ENCODE measurements at regions of chr18 and their contacts with region 1.

Region 1: DNA sequence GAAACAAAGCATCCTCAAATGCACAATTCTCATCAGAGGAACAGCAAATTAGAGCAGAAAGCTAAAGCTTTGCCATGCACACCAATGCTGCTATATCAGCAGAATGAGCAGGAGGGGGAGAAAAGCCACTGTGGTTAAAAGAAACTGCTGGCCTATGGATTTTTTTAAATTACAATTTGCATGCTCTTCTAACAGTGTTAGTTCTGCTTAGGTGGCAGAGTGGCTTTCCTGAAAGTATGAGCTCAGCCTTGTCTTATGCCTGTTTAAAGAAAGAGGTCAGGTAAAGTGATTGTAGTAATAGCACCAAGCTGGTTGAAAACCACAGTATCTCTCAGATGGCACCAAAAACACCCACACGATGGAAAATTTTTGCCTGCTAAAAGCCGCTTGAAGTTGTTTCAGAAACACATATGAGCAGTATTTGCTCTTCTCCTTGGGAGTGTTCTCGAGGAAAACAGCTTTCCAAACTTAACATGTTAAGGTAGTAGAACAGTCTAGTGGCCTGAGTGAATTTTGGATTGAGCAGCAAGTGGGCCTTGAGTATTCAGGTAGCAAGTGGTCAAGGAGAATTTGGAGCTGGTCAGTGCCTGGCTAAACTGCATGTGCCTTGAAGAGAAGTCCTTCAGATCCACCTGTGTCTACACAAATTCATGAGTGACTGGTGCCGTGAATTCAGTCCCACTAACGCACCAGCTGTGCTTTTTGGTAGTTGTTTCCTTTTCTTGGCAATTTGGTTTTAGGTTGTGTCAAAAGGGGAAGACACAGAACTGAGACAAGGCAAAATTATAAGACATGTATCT is 19.6 kb upstream of the NDUFV2 start:
- DNase-seq: peak; percentile 49
- H3K4me3 Mint-ChIP-seq: peak overlapping the region; percentile 72
- H3K27ac Mint-ChIP-seq: peak overlapping the region; percentile 99
- H3K4me1 Mint-ChIP-seq: peaks cover 50% of the 10 kb centered on the region
- H3K27me3 Mint-ChIP-seq: no peaks in the 10 kb centered on the region

Region 2: DNA sequence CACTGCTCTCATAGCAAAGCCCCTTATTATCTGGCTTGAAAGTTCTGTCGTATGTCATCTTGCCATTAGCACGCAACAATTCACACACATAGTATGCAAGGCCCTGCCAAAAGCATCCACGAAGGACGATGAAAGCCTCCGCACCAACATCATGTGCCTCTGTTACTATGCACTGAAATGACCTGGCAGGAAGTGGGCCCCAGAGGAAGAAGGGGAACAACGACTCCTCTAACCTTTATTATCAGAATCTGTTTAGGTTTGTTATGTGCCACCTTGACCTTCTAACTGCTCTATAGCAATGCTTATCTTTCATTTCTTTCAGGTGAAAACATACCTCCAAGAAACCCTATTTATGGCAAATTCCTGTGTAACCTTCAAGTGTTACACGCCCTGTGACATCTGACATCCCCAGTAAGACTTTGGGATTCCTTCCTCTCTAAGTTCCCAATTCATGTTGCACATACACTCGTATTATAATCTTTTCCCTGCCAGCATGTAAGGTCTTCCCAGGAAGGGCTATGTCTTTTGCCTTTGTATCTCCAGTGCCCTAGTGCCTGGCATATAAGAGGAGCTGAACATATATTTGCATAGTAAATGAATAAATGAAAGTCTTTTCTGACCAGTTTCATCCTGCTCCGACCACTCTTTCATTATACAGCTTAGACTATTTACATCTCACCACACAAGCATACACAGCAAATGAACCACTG is 12.5 kb after region 1 on chr18:
- intact Hi-C with region 1: loop called (anchors 1 kb)
- DNase-seq: peak; percentile 58
- H3K4me3 Mint-ChIP-seq: peak overlapping the region; percentile 62
- H3K27ac Mint-ChIP-seq: peak overlapping the region; percentile 99
- H3K4me1 Mint-ChIP-seq: peaks cover 66% of the 10 kb centered on the region
- H3K27me3 Mint-ChIP-seq: no peaks in the 10 kb centered on the region

Region 3: DNA sequence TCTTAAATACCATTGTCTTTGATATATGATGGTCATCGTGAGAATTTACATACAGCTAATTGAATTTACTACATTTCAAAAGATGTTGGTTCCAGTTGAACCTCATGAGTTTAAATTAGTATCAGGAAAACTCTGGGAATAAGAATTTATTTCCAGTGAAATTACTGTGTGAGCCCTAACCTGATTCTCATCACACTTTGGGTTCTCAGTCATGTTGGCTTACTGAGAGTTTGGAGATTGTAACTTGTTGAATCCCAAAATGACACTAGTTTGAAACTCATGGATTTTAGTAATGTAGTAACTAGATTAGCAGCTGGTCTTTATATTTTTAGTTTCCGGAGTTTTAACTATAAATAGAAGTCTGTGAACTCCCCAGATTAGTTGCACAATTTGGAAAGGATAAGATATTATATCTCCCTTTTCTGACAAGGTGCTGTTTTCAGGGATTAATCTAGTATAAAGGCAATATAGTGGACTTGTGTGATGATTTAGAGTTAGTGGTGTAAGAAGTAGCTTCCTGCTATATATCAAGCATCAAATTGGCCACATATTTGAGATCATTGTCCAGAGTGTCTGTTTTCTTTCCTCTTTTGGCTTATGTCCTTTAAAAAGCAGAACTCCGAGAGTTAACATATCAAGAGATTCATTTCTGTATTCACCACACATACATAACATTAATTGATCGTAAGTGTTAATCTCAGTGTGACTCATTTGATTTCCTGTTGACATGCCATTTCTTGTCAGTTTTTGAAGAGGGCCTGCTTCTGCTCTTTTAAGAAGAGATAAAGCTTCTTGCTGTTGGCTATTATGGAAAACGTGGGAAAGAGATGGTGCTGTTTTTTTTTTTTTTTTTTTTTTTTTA is 35.3 kb after region 1 on chr18:
- intact Hi-C with region 1: loop called (anchors 1 kb)
- DNase-seq: no peak
- H3K4me3 Mint-ChIP-seq: peak overlapping the region; percentile 39
- H3K27ac Mint-ChIP-seq: peak overlapping the region; percentile 84
- H3K4me1 Mint-ChIP-seq: peaks cover 51% of the 10 kb centered on the region
- H3K27me3 Mint-ChIP-seq: no peaks in the 10 kb centered on the region

Region 4: DNA sequence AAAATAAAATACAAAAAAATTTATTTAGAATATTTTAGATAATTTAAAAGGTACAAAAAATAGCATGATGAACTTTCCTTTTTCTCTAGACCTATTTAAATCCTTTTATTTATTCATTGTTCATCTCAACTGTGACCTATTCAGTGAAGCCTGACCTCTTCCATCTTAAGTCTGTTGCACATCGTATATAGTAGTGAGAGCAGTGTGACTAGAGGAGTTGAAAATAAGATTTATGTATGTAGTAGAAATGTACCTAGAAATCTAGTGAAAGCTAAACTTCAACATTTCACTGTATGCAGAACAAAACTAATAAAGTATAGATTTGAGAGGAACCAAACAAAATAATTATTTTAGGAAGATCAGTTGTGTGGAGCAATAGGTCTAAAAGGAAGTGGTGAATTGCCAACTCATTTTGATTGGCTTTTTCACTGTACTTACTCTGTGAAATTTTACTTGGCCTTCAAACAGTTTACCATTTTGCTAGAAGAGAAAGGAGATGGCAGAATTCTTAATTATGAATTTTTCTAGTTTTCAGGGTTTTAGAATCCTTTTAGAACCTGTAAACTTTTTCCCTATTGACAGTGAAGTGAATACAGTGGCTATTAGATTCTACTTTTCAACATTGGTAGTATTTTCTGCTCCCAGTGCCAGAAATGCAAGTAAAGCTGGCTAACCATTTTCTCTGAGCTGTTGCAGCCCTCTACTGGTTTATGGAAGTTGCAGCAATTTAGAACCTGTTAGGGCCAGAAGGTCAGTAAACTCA is 64.7 kb after region 1 on chr18:
- intact Hi-C with region 1: loop called (anchors 1 kb)
- DNase-seq: peak; percentile 23
- H3K4me3 Mint-ChIP-seq: peak overlapping the region; percentile 61
- H3K27ac Mint-ChIP-seq: peak overlapping the region; percentile 91
- H3K4me1 Mint-ChIP-seq: peaks cover 57% of the 10 kb centered on the region
- H3K27me3 Mint-ChIP-seq: no peaks in the 10 kb centered on the region